Heart right ventricle (tissue), 16 donors: ENCODE measurements at regions of chr2 and their contacts with region 1.

Region 1: GRCh38 chr2:8893978-8894820 is 56.8 kb upstream of the KIDINS220 start:
- DNase-seq: no peak
- ATAC-seq: no peak
- H3K4me3 ChIP-seq: no peak overlapping the region
- H3K27ac ChIP-seq: no peak overlapping the region
- H3K4me1 ChIP-seq: no peaks in the 10 kb centered on the region
- H3K27me3 ChIP-seq: no peaks in the 10 kb centered on the region
- CTCF ChIP-seq: no peak

Region 2: GRCh38 chr2:9003616-9004337 is 109.6 kb after region 1 on chr2 and contains the start of gene MBOAT2:
- intact Hi-C with region 1: loop called in 1 of 10 experiments (anchors 10 kb)
- DNase-seq: peak; percentile 86 to 90
- ATAC-seq: peak; percentile 94 to 98 (median 97)
- H3K4me3 ChIP-seq: peak within 1 kb of the TSS; percentile 58 to 83 (median 76)
- H3K27ac ChIP-seq: peak within 1 kb of the TSS; percentile 32 to 91 (median 84)
- H3K4me1 ChIP-seq: peaks cover 0 to 32% (median 11%) of the 10 kb centered on the region in 9 donors
- H3K27me3 ChIP-seq: no peaks in the 10 kb centered on the region
- CTCF ChIP-seq: no peak
- total RNA-seq, gene MBOAT2: 11.5 to 35.3 (median 22.2) TPM

Region 3: GRCh38 chr2:9017411-9017810 is 123.2 kb after region 1 on chr2:
- intact Hi-C with region 1: no loop called
- DNase-seq: no peak
- ATAC-seq: no peak
- H3K4me3 ChIP-seq: no peak overlapping the region
- H3K27ac ChIP-seq: no peak overlapping the region
- H3K4me1 ChIP-seq: no peaks in the 10 kb centered on the region
- H3K27me3 ChIP-seq: peaks cover 0 to 5% (median 0%) of the 10 kb centered on the region in 7 donors
- CTCF ChIP-seq: no peak